Activated CD8-positive, alpha-beta T cell treated with anti-CD3 and anti-CD28 coated beads, Interleukin-2, amount 10 ng/mL, durations not matched to agents 7 days and 5 days (primary cell): ENCODE measurements at regions of chr6 and their contacts with region 1.

Region 1: GRCh38 chr6:132962936-132963868 is 148.8 kb downstream of the RPS12 start:
- DNase-seq: peak; percentile 75
- ATAC-seq: peak; percentile 95
- H3K4me3 Mint-ChIP-seq: no peak overlapping the region
- H3K27ac Mint-ChIP-seq: no peak overlapping the region
- H3K4me1 Mint-ChIP-seq: peaks cover 19% of the 10 kb centered on the region
- H3K27me3 Mint-ChIP-seq: peaks cover 18% of the 10 kb centered on the region

Region 2: DNA sequence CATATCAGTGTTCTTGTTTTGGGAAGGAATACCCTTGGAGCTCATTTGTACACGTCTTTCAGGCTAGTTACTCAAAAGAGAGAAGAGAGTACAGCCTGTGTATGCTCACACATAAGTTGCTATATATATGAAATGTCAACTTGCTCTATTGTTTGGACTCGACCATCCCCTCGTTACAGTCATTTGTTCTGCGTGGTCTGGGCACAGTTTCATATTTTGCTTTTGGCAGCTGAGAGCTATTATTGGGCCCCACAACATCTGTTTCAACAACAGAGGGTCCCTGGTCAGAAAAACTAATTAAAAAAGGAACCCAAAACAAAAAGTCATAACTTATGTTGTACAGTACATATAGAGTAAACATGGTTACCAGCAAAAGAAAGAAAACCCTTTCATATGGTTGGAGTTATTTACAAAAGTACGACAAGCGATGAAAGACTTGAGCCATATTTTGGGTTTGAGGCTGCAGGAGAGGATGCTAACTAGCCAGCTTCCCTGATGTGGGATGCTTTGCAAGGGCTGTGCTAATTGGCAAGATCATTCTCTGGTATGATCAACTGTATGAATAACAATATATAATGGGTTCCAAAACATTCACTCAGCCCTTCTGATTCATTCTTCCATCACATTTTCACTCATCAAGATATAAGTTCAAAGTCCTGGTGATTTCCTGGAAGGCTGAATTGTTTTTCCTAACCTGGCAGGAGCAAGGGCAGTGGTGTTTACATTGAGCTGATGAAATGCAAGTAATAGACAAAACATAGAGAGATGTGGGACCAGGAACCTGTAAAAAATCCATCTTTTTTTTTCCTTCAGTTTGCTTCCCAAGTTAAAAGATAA is 11.0 kb before region 1 on chr6:
- CTCF ChIA-PET with region 1: interaction called, 15 read pairs
- POLR2A ChIA-PET with region 1: no interaction called
- DNase-seq: no peak
- ATAC-seq: no peak
- H3K4me3 Mint-ChIP-seq: no peak overlapping the region
- H3K27ac Mint-ChIP-seq: no peak overlapping the region
- H3K4me1 Mint-ChIP-seq: no peaks in the 10 kb centered on the region
- H3K27me3 Mint-ChIP-seq: peaks cover 41% of the 10 kb centered on the region